GM12878 (cell line): ENCODE measurements at regions of chr21 and their contacts with region 1.

Region 1: GRCh38 chr21:33947451-33948095 is 32.0 kb upstream of the ATP5PO start:
- DNase-seq: peak; percentile 83
- ATAC-seq: peak; percentile 72
- H3K4me3 ChIP-seq: peak overlapping the region; percentile 46; the same call in 1 of the 2 replicates
- H3K27ac ChIP-seq: peak overlapping the region; percentile 97
- H3K4me1 ChIP-seq: peaks cover 51% of the 10 kb centered on the region
- H3K27me3 ChIP-seq: no peaks in the 10 kb centered on the region
- CTCF ChIP-seq: peak in 1 of 3 experiments; percentile 15; a peak in 1 of 6 replicates
- EP300 ChIP-seq: peak in 1 of 2 experiments; percentile 62; a peak in 3 of 4 replicates
- POLR2A ChIP-seq: no peak; the same call in 1 of the 2 replicates
- RAD21 ChIP-seq: peak; percentile 33; the same call in 1 of the 2 replicates

Region 2: GRCh38 chr21:33824156-33824941 is 123.2 kb before region 1 on chr21:
- CTCF ChIA-PET with region 1: no interaction called
- POLR2A ChIA-PET with region 1: no interaction called
- RAD21 ChIA-PET with region 1: no interaction called
- SMC1A ChIA-PET with region 1: no interaction called
- in situ Hi-C with region 1: no loop called
- intact Hi-C with region 1: no loop called
- DNase-seq: no peak
- ATAC-seq: no peak
- H3K4me3 ChIP-seq: no peak overlapping the region
- H3K27ac ChIP-seq: no peak overlapping the region
- H3K4me1 ChIP-seq: no peaks in the 10 kb centered on the region
- H3K27me3 ChIP-seq: no peaks in the 10 kb centered on the region
- CTCF ChIP-seq: no peak
- EP300 ChIP-seq: no peak
- POLR2A ChIP-seq: no peak
- RAD21 ChIP-seq: no peak

Region 3: DNA sequence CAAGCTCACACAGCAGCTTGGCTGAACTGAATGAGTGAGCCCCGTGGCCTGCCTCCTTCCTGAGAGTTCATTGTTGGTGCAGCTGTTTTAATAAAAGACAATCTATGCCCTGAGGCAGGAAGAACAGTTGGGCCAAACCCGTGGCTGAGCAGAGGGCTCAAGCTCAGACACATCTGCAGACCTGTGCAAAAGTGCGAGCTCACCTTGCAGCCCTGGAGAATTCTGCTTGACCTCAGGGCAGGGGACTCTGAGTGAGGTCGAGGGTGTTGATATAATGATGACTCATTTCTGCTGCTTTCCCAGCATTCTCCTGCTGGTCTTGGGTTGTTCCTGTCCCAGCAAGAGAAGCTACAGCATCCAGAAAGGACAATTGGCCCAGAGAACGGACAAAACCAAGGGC is 93.0 kb before region 1 on chr21:
- CTCF ChIA-PET with region 1: no interaction called
- POLR2A ChIA-PET with region 1: no interaction called
- RAD21 ChIA-PET with region 1: no interaction called
- SMC1A ChIA-PET with region 1: no interaction called
- in situ Hi-C with region 1: no loop called
- intact Hi-C with region 1: no loop called
- DNase-seq: no peak
- ATAC-seq: no peak
- H3K4me3 ChIP-seq: no peak overlapping the region
- H3K27ac ChIP-seq: no peak overlapping the region
- H3K4me1 ChIP-seq: no peaks in the 10 kb centered on the region
- H3K27me3 ChIP-seq: no peaks in the 10 kb centered on the region
- CTCF ChIP-seq: no peak
- EP300 ChIP-seq: no peak
- POLR2A ChIP-seq: no peak
- RAD21 ChIP-seq: no peak

Region 4: DNA sequence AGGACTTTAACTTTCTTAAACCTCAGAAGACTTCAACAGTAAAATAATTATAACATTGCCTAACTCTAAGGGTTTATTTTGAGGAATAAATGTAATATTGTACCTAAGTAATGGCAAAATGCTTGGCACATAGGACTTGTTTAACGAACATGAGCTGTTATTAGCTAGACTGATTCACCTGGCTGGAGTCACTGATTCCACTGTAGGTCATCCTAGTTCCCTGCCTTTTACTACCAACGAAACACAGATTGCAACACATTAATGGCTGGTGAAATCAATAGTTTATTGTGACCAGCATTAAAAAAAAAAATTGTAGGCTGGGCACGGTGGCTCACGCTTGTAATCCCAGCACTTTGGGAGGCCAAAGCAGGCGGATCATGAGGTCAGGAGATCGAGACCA is 13.5 kb after region 1 on chr21:
- CTCF ChIA-PET with region 1: interaction called, 7 read pairs
- POLR2A ChIA-PET with region 1: interaction called, 6 read pairs
- RAD21 ChIA-PET with region 1: interaction called, 182 read pairs
- SMC1A ChIA-PET with region 1: interaction called, 290 read pairs
- in situ Hi-C with region 1: no loop called
- intact Hi-C with region 1: no loop called
- DNase-seq: no peak
- ATAC-seq: no peak
- H3K4me3 ChIP-seq: no peak overlapping the region
- H3K27ac ChIP-seq: no peak overlapping the region
- H3K4me1 ChIP-seq: no peaks in the 10 kb centered on the region
- H3K27me3 ChIP-seq: no peaks in the 10 kb centered on the region
- CTCF ChIP-seq: no peak
- EP300 ChIP-seq: no peak
- POLR2A ChIP-seq: no peak
- RAD21 ChIP-seq: no peak

Region 5: GRCh38 chr21:33976082-33977016 is 28.8 kb after region 1 on chr21:
- CTCF ChIA-PET with region 1: interaction called, 24 read pairs
- POLR2A ChIA-PET with region 1: interaction called, 54 read pairs
- RAD21 ChIA-PET with region 1: interaction called, 182 read pairs
- SMC1A ChIA-PET with region 1: interaction called, 290 read pairs
- in situ Hi-C with region 1: no loop called
- intact Hi-C with region 1: loop called (anchors 1 kb)
- DNase-seq: peak; percentile 90
- ATAC-seq: peak; percentile 71
- H3K4me3 ChIP-seq: peak overlapping the region; percentile 51; the same call in 1 of the 2 replicates
- H3K27ac ChIP-seq: peak overlapping the region; percentile 99
- H3K4me1 ChIP-seq: peaks cover 27% of the 10 kb centered on the region
- H3K27me3 ChIP-seq: no peaks in the 10 kb centered on the region
- CTCF ChIP-seq: no peak
- EP300 ChIP-seq: no peak; a peak in 2 of 4 replicates
- POLR2A ChIP-seq: peak; percentile 57
- RAD21 ChIP-seq: no peak

Region 6: DNA sequence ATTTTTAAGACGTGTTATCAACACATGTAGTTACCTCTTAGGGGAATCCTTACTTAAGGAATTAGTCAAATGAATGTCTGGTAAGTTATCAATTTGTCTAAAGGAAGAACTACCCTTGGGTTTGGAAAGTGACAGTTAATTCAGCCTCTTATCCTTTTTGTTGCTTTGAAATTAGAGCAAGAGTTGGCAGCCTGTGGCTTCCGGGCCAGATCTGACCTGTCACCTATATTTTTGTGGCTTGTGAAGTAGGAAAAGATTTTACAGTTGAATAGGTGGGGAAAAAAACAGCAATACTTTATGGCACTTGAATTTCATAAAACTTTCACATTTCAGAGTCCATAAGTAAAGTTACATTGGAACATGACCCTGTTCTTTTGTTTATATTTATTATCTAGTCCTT is 131.3 kb after region 1 on chr21:
- CTCF ChIA-PET with region 1: interaction called, 4 read pairs
- POLR2A ChIA-PET with region 1: interaction called, 10 read pairs
- RAD21 ChIA-PET with region 1: interaction called, 20 read pairs
- SMC1A ChIA-PET with region 1: interaction called, 9 read pairs
- in situ Hi-C with region 1: loop called (anchors 5 kb)
- intact Hi-C with region 1: loop called (anchors 2 kb)
- DNase-seq: no peak
- ATAC-seq: peak; percentile 8; the same call in 2 of the 3 replicates
- H3K4me3 ChIP-seq: 0 out of 2 replicates have a peak overlapping the region, but pooled peaks have one; percentile 16
- H3K27ac ChIP-seq: 0 out of 2 replicates have a peak overlapping the region, but pooled peaks have one; percentile 9
- H3K4me1 ChIP-seq: peaks cover 32% of the 10 kb centered on the region
- H3K27me3 ChIP-seq: no peaks in the 10 kb centered on the region
- CTCF ChIP-seq: no peak
- EP300 ChIP-seq: no peak
- POLR2A ChIP-seq: no peak
- RAD21 ChIP-seq: no peak